CD4-positive, alpha-beta T cell (primary cell): ENCODE measurements at regions of chr12 and their contacts with region 1.

Region 1: DNA sequence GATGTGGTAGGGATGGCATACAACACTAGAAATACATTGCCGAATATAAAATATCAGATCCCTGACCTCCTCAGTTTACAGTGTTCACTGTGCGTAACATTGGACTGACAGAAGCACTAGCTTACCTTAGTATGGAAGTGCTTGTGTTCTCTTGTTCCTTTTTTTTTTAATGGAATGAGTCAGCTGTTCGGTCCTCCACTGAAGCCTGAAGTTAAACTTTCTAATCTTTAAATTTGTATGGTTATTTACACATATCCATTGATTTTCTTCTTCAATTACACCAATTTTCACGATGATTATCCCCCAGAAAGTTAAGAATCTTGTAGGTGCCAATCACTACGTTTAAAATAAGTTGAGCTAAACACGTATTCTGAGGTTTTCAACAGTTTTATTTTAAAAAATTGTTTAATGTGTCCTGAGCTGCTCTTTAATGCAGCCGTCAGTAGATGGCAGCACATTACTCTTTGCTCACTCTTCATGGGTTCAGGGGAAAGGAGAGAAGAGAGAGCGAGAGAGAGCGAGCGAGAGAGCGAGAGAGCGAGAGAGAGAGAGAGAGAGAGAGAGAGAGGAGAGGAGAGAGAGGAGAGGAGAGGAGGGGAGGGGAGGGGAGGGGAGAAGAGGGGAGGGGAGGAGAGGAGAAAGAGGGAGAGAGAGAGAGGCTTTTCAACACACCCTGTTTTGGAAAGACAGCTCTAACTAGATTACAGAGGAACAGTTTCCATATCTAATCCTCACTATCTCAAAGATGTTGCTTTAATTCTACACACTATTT is 134.7 kb upstream of the SCAF11 start:
- DNase-seq: peak in 13 of 14 experiments; percentile 16 to 87 (median 46)
- ATAC-seq: peak; percentile 97
- H3K4me3 ChIP-seq: no peak overlapping the region
- H3K4me3 Mint-ChIP-seq: peak overlapping the region; percentile 39
- H3K27ac ChIP-seq: no peak overlapping the region
- H3K27ac Mint-ChIP-seq: peak overlapping the region; percentile 62
- H3K4me1 ChIP-seq: no peaks in the 10 kb centered on the region
- H3K4me1 Mint-ChIP-seq: peaks cover 7% of the 10 kb centered on the region
- H3K27me3 ChIP-seq: no peaks in the 10 kb centered on the region
- H3K27me3 Mint-ChIP-seq: peaks cover 4% of the 10 kb centered on the region
- CTCF ChIP-seq: peak; percentile 49

Region 2: DNA sequence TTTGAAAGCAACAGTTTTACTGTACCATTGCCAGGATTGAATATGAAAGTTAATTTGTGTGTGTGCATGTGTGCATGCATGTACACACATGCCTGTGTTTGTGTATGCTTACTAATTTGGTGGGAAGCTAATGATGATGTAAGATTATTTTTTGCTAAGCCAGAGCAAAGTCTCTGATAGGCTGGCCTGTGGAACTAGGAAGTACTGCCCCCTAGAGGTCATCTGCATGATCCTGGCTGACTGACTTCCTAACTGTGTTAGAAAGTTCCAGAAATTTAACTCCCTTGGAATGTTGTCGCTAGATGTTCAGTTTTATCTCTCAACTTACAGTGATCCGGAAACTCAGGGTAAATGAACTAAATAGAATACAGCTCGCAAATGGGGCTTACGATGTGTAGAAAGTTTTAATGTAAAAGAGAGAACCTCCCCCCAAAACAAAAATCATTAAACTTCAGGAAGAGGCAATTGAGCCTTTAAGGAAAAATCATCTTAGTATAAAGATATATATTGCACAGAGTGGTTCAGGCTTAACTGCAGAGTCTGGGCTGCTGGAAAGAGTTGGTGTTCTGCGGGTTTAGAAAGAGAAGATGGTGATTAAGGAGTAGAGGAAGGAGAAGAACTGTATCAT is 178.1 kb after region 1 on chr12:
- CTCF ChIA-PET with region 1: interaction called, 8 read pairs
- POLR2A ChIA-PET with region 1: interaction called, 4 read pairs
- intact Hi-C with region 1: loop called in 1 of 2 experiments (anchors 2 kb)
- DNase-seq: peak; percentile 15 to 86 (median 44)
- ATAC-seq: peak; percentile 89
- H3K4me3 ChIP-seq: no peak overlapping the region
- H3K4me3 Mint-ChIP-seq: no peak overlapping the region
- H3K27ac ChIP-seq: no peak overlapping the region
- H3K27ac Mint-ChIP-seq: no peak overlapping the region
- H3K4me1 ChIP-seq: no peaks in the 10 kb centered on the region
- H3K4me1 Mint-ChIP-seq: peaks cover 18% of the 10 kb centered on the region
- H3K27me3 ChIP-seq: no peaks in the 10 kb centered on the region
- H3K27me3 Mint-ChIP-seq: no peaks in the 10 kb centered on the region
- CTCF ChIP-seq: peak; percentile 96

Region 3: DNA sequence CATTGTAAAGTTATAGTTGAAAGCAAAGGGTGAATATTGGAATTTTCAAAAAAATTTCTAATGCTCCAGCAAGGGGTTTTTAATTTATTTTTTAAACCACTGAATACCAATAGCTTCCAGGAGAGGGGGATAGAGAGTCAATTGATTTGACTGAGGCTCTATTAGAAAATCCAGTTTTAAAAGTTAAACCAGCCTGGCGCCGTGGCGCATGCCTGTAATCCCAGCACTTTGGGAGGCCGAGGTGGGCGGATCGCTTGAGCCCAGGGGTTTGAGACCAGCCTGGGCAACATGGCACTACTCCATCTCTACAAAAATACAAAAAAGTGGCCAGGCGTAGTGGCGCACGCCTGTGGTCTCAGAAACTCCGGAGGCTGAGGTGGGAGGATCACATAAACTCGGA is 550.7 kb after region 1 on chr12:
- CTCF ChIA-PET with region 1: interaction called, 5 read pairs
- POLR2A ChIA-PET with region 1: no interaction called
- intact Hi-C with region 1: loop called in 1 of 2 experiments (anchors 2 kb)
- DNase-seq: peak in 3 of 14 experiments; percentile 28 to 40 (median 36)
- ATAC-seq: no peak
- H3K4me3 ChIP-seq: no peak overlapping the region
- H3K4me3 Mint-ChIP-seq: no peak overlapping the region
- H3K27ac ChIP-seq: no peak overlapping the region
- H3K27ac Mint-ChIP-seq: no peak overlapping the region
- H3K4me1 ChIP-seq: no peaks in the 10 kb centered on the region
- H3K4me1 Mint-ChIP-seq: no peaks in the 10 kb centered on the region
- H3K27me3 ChIP-seq: no peaks in the 10 kb centered on the region
- H3K27me3 Mint-ChIP-seq: no peaks in the 10 kb centered on the region
- CTCF ChIP-seq: peak; percentile 59

Region 4: DNA sequence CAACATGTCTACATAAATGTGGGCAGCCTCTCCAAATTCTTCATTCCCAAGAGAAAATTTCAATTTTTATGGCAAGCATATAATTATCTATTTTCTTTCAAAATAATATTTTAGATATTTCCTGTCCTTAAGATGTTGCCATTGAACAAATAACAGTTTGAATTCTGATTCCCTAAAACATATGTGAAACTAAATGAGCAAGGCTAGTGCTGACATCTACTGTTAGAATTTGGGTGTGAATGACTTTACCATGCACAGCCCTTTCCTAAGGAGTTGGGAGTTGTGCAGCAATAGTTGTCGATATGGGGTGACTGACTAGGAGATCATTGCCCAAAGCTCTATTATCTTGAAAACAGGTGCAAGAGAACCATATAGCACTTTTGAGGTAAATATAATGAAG is 808.9 kb after region 1 on chr12:
- CTCF ChIA-PET with region 1: no interaction called
- POLR2A ChIA-PET with region 1: no interaction called
- intact Hi-C with region 1: loop called in 1 of 2 experiments (anchors 10 kb)
- DNase-seq: peak in 3 of 14 experiments; percentile 23 to 37 (median 34)
- ATAC-seq: no peak
- H3K4me3 ChIP-seq: no peak overlapping the region
- H3K4me3 Mint-ChIP-seq: no peak overlapping the region
- H3K27ac ChIP-seq: no peak overlapping the region
- H3K27ac Mint-ChIP-seq: no peak overlapping the region
- H3K4me1 ChIP-seq: no peaks in the 10 kb centered on the region
- H3K4me1 Mint-ChIP-seq: no peaks in the 10 kb centered on the region
- H3K27me3 ChIP-seq: no peaks in the 10 kb centered on the region
- H3K27me3 Mint-ChIP-seq: peaks cover 19% of the 10 kb centered on the region
- CTCF ChIP-seq: no peak

Region 5: DNA sequence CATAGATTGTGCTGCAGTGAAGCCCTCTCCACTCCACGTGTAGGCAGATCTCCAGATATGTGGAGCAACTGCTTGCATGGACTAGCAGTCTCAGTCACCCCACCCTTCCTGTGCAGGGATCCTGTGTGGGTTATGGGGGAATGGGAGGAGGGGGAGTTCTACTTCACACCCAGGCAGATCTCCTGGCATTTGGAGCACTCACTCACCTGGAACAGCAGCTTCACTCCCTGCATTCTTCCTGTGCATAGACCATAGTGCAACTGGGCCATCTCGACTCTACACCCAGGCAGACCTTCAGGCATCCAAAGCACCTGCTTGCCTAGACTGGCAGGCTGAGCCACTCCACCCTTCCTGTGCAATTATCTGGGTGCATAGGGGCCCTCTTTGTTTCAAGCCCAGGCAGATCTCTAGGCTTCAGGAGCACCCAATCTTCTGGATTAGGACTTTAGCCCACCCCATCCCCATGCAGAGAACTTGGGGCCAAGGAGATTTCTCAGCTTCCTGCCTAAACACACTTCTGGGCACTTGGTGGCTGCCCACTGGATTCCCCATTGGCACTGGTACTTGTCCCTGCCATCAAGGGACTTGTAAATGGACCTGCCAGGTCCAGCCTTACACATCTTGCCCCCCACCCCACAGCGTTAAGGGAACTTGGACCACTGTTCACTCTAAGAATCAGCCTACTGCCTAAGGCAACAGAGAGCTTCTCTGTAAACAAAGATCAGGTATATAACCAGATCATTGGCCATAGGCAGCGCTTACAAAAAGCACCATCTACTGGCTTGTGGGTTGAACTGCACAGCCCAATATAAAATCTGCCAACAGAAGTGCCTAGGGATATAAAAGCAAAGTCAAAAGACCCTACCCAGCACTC is 858.6 kb after region 1 on chr12:
- CTCF ChIA-PET with region 1: no interaction called
- POLR2A ChIA-PET with region 1: no interaction called
- intact Hi-C with region 1: loop called in 1 of 2 experiments (anchors 10 kb)
- DNase-seq: peak in 12 of 14 experiments; percentile 2 to 60 (median 18)
- ATAC-seq: peak; percentile 74
- H3K4me3 ChIP-seq: no peak overlapping the region
- H3K4me3 Mint-ChIP-seq: no peak overlapping the region
- H3K27ac ChIP-seq: no peak overlapping the region
- H3K27ac Mint-ChIP-seq: no peak overlapping the region
- H3K4me1 ChIP-seq: peaks cover 10% of the 10 kb centered on the region
- H3K4me1 Mint-ChIP-seq: peaks cover 7% of the 10 kb centered on the region
- H3K27me3 ChIP-seq: peaks cover 2 to 7% of the 10 kb centered on the region in 2 experiments
- H3K27me3 Mint-ChIP-seq: peaks cover 20% of the 10 kb centered on the region
- CTCF ChIP-seq: peak; percentile 53

Region 6: GRCh38 chr12:47021298-47021697 is 896.3 kb after region 1 on chr12:
- CTCF ChIA-PET with region 1: interaction called, 9 read pairs
- POLR2A ChIA-PET with region 1: interaction called, 4 read pairs
- intact Hi-C with region 1: loop called (anchors 1 to 2 kb)
- DNase-seq: peak in 3 of 14 experiments; percentile 57 to 72 (median 67)
- ATAC-seq: peak; percentile 39
- H3K4me3 ChIP-seq: no peak overlapping the region
- H3K4me3 Mint-ChIP-seq: no peak overlapping the region
- H3K27ac ChIP-seq: no peak overlapping the region
- H3K27ac Mint-ChIP-seq: no peak overlapping the region
- H3K4me1 ChIP-seq: no peaks in the 10 kb centered on the region
- H3K4me1 Mint-ChIP-seq: no peaks in the 10 kb centered on the region
- H3K27me3 ChIP-seq: no peaks in the 10 kb centered on the region
- H3K27me3 Mint-ChIP-seq: peaks cover 20% of the 10 kb centered on the region
- CTCF ChIP-seq: peak; percentile 83